ENCODE measurements at regions of chr5 and their contacts with region 1.

Region 1: GRCh38 chr5:176660860-176661641 is 13.8 kb downstream of the TSPAN17 start:
- DNase-seq: peak; percentile 64
- H3K4me3 ChIP-seq: no peak overlapping the region
- H3K27ac ChIP-seq: no peak overlapping the region
- H3K4me1 ChIP-seq: peaks cover 19% of the 10 kb centered on the region
- H3K27me3 ChIP-seq: peaks cover 40% of the 10 kb centered on the region
- CTCF ChIP-seq: peak; percentile 98

Region 2: DNA sequence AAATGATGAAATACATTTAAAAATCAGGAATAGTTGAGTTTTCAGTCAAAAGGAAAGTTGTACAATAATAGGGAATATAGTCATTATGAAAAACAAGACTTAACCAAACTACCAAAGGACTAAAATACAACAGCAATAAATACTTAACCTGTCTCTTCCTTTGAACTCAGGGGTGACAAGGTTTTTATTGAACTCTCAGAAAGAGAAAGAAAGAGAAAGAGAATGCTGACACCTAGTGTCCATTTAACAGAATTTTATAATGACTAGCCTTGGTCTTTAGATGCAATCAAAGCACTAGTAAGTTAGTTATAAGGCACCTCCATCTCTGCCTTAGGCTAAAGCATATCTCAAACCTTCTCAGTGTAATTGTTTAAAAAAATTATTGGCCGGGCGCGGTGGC is 298.0 kb after region 1 on chr5:
- intact Hi-C with region 1: loop called (anchors 10 kb)
- DNase-seq: no peak
- H3K4me3 ChIP-seq: no peak overlapping the region
- H3K27ac ChIP-seq: no peak overlapping the region
- H3K4me1 ChIP-seq: peaks cover 27% of the 10 kb centered on the region
- H3K27me3 ChIP-seq: no peaks in the 10 kb centered on the region
- CTCF ChIP-seq: peak; percentile 59

Region 3: GRCh38 chr5:177176175-177176711 is 515.2 kb after region 1 on chr5:
- intact Hi-C with region 1: no loop called
- DNase-seq: no peak
- H3K4me3 ChIP-seq: no peak overlapping the region
- H3K27ac ChIP-seq: no peak overlapping the region
- H3K4me1 ChIP-seq: peaks cover 26% of the 10 kb centered on the region
- H3K27me3 ChIP-seq: no peaks in the 10 kb centered on the region
- CTCF ChIP-seq: no peak

Measured in left ventricle myocardium inferior (tissue), 1 donor.